HepG2 (cell line): ENCODE measurements at regions of chrX and their contacts with region 1.

Region 1: DNA sequence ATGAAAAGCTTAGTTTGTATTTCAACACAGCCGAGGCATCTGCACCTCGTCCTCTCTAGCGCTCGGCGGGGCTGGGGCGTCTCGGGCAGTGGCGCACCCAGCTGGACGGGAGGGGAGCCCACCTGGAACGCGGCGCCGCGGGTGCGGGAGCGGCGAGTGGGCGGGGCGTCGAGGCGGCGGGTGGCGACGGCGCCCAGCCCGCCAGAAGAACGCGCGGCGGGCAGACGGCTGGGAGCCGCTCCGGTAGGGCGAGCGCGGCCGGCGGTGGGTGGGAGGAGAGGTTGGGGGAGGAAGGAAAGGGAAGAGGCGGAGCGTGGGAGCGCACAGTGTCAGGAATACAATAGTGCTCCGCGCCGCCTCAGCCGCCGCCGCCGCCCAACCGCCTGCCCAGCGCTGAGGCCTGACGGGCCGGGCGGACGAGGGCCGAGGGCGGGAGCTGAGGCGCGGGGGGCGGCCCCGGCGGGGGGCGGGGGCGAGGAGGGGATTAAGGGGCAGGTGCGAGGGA is at the start of gene JADE3:
- DNase-seq: peak; percentile 55
- ATAC-seq: peak; percentile 88
- H3K4me3 ChIP-seq: peak within 1 kb of the TSS; percentile 69 to 76 (median 75)
- H3K27ac ChIP-seq: peak within 1 kb of the TSS; percentile 68
- H3K4me1 ChIP-seq: peaks cover 38% of the 10 kb centered on the region
- H3K27me3 ChIP-seq: no peaks in the 10 kb centered on the region
- CTCF ChIP-seq: peak; percentile 46
- EP300 ChIP-seq: no peak
- POLR2A ChIP-seq: no peak
- RAD21 ChIP-seq: 0 out of 2 replicates have a peak, but pooled peaks have one; percentile 11
- total RNA-seq, gene JADE3: 7.7 and 16.9 TPM in 2 replicates

Region 2: DNA sequence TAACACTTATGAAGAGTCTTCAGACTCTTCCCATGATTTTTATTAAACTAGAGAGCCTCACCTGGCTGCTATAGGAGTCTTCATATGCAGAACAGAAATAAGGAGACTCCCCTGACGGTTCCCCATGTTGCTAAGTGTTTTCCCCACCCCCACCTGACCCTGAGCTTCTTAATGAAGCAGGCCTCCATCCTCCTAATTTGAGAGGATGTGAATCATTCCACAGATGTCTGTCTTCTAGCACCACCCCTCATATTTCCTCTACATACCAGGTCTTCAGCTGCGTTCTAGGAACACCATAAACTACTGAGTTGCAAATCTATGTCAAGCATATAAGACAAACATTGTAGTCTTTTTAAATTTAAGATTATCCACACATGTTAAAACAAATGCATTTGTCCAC is 38.4 kb before region 1 on chrX:
- CTCF ChIA-PET with region 1: no interaction called
- POLR2A ChIA-PET with region 1: no interaction called
- in situ Hi-C with region 1: no loop called
- intact Hi-C with region 1: loop called (anchors 1 kb)
- DNase-seq: no peak
- ATAC-seq: no peak
- H3K4me3 ChIP-seq: no peak overlapping the region
- H3K27ac ChIP-seq: no peak overlapping the region
- H3K4me1 ChIP-seq: no peaks in the 10 kb centered on the region
- H3K27me3 ChIP-seq: no peaks in the 10 kb centered on the region
- CTCF ChIP-seq: no peak
- EP300 ChIP-seq: no peak
- POLR2A ChIP-seq: no peak
- RAD21 ChIP-seq: no peak

Region 3: DNA sequence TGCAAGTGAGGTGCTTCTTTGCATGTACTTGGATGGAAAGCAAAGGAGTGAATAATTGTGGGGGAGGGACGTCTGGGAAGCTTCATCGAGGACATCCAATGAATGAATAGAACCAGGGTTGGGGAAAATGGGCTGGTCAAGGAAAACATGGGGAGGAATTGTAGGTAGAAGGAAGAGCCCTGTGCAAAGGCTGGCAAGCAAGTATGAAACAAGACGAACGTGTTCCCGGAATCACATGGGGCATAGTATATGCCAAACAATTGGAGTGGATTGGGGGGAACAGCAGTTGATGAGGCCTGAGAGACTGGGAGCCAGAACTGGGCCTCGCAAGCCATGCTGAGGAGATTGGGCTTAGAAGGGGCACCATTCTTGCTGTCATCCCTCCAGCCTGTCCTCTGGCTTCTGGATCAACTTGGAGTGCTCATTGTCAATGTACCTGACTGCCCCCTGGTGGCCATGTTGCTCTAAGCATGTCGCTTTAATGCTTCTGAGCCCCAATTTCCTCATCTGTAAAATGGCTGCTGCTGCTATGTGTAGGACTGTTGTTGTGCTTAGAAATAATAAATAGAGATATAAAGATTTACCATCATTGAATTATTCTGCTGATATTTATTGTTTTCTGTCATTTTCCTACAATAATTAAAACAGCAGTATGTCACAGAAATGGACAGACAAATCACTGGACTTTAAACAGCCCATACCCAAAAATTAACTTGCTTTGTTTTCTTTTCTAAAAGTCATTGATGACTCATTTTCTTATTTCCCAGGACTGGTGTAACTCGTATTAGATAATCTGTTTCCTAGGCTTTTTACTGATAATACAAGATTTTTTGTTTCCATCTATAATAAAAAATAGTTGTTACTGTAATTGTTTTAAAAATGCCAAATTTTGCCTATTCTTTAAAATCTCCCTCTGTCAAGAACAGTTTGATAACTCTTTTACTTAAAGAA is 66.5 kb after region 1 on chrX:
- CTCF ChIA-PET with region 1: interaction called, 4 read pairs
- POLR2A ChIA-PET with region 1: interaction called, 3 read pairs
- in situ Hi-C with region 1: no loop called
- intact Hi-C with region 1: loop called (anchors 2 kb)
- DNase-seq: peak; percentile 64
- ATAC-seq: peak; percentile 87
- H3K4me3 ChIP-seq: no peak overlapping the region
- H3K27ac ChIP-seq: no peak overlapping the region
- H3K4me1 ChIP-seq: no peaks in the 10 kb centered on the region
- H3K27me3 ChIP-seq: no peaks in the 10 kb centered on the region
- CTCF ChIP-seq: peak; percentile 82
- EP300 ChIP-seq: no peak
- POLR2A ChIP-seq: no peak
- RAD21 ChIP-seq: peak; percentile 62

Region 4: DNA sequence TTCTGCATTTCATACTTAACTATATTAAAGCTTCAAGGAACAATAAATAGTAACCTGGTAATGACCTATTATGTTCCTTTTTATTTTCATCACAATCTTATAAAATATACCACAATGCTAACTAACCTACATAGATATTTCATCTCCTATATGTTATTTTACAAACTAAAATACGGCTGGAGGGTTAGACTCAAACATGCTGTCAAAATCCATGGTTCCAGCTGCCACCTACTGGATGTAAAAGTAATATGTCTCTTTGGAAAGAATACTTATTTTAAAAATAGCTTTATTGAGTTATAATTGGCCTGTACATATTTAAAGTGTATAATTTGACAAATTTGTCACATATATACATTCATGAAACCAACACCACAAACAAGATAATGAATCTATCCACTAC is 181.1 kb after region 1 on chrX:
- CTCF ChIA-PET with region 1: no interaction called
- POLR2A ChIA-PET with region 1: no interaction called
- in situ Hi-C with region 1: loop called (anchors 5 kb)
- intact Hi-C with region 1: no loop called
- DNase-seq: no peak
- ATAC-seq: no peak
- H3K4me3 ChIP-seq: no peak overlapping the region
- H3K27ac ChIP-seq: no peak overlapping the region
- H3K4me1 ChIP-seq: peaks cover 27% of the 10 kb centered on the region
- H3K27me3 ChIP-seq: no peaks in the 10 kb centered on the region
- CTCF ChIP-seq: peak; percentile 47
- EP300 ChIP-seq: no peak
- POLR2A ChIP-seq: no peak
- RAD21 ChIP-seq: no peak

Region 5: GRCh38 chrX:47129157-47129898 is 217.2 kb after region 1 on chrX:
- CTCF ChIA-PET with region 1: no interaction called
- POLR2A ChIA-PET with region 1: no interaction called
- in situ Hi-C with region 1: no loop called
- intact Hi-C with region 1: no loop called
- DNase-seq: peak; percentile 90
- ATAC-seq: peak; percentile 99
- H3K4me3 ChIP-seq: peak overlapping the region; percentile 58 to 75 (median 65)
- H3K27ac ChIP-seq: peak overlapping the region; percentile 73
- H3K4me1 ChIP-seq: no peaks in the 10 kb centered on the region
- H3K27me3 ChIP-seq: no peaks in the 10 kb centered on the region
- CTCF ChIP-seq: no peak
- EP300 ChIP-seq: no peak
- POLR2A ChIP-seq: peak; percentile 35 to 47; a peak in 3 of 4 replicates
- RAD21 ChIP-seq: no peak

Region 6: GRCh38 chrX:47467131-47467530 is 555.0 kb after region 1 on chrX:
- CTCF ChIA-PET with region 1: no interaction called
- POLR2A ChIA-PET with region 1: no interaction called
- in situ Hi-C with region 1: no loop called
- intact Hi-C with region 1: no loop called
- DNase-seq: no peak
- ATAC-seq: no peak
- H3K4me3 ChIP-seq: no peak overlapping the region
- H3K27ac ChIP-seq: no peak overlapping the region
- H3K4me1 ChIP-seq: no peaks in the 10 kb centered on the region
- H3K27me3 ChIP-seq: no peaks in the 10 kb centered on the region
- CTCF ChIP-seq: no peak
- EP300 ChIP-seq: no peak
- POLR2A ChIP-seq: no peak
- RAD21 ChIP-seq: no peak